Right ventricle myocardium superior (tissue), 1 donor: ENCODE measurements at regions of chrX and their contacts with region 1.

Region 1: GRCh38 chrX:48021026-48021900 is 14.5 kb downstream of the SPACA5 start:
- DNase-seq: peak; percentile 86
- ATAC-seq: peak; percentile 93

Region 2: GRCh38 chrX:47650164-47651042 is 370.9 kb before region 1 on chrX and contains the start of gene ELK1:
- intact Hi-C with region 1: loop called (anchors 10 kb)
- DNase-seq: peak; percentile 96
- ATAC-seq: peak; percentile 95
- total RNA-seq, gene ELK1: 20.9 TPM

Region 3: GRCh38 chrX:47836164-47837072 is 184.8 kb before region 1 on chrX and contains the start of gene ZNF81:
- intact Hi-C with region 1: loop called (anchors 10 kb)
- DNase-seq: peak; percentile 97
- ATAC-seq: peak; percentile 98
- total RNA-seq, gene ZNF81: 5.3 TPM

Region 4: DNA sequence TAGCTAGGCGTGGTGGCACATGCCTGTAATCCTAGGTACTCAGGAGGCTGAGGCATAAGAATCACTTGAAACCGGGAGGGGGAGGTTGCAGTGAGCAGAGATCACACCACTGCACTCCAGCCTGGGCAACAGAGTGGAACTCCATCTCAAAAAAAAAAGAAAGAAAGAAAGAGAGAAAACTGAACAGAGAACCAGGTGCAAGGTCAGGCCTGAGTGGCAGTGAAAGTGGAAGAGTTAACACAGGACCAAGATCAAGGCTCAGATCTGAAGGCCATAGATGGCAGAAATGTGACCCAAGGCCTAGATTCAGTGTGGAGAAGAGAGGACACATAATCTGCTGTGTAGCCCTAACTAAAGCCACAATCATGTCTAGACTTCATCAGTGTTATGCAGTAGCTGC is 55.1 kb after region 1 on chrX:
- intact Hi-C with region 1: no loop called
- DNase-seq: no peak
- ATAC-seq: no peak

Region 5: DNA sequence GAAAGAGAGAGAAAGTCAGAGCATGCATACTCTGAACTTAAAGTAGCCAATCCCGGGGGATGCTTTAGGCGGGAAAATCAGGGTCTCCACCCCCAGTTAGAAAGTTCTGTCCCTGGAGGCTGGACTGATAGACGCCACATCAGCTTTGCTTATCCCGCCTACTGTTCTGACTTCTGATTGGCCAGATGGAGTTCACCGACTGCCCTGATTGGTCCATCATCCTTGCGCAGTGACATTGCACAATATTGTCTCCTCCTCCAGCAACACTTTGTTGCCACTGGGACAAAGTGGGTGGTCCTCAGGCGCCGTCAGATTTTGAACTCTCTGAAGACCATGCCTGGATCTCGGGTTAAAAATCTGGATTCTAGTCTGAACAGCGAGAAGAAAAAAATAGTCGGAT is 284.9 kb after region 1 on chrX:
- intact Hi-C with region 1: no loop called
- DNase-seq: no peak
- ATAC-seq: no peak